ENCODE measurements at regions of chr19 and their contacts with region 1.

Region 1: GRCh38 chr19:37506387-37507166 is at the start of gene ZNF793:
- DNase-seq: peak; percentile 70
- ATAC-seq: peak; percentile 87
- H3K4me3 Mint-ChIP-seq: no peak within 1 kb of the TSS
- H3K27ac Mint-ChIP-seq: no peak within 1 kb of the TSS
- H3K4me1 Mint-ChIP-seq: peaks cover 2% of the 10 kb centered on the region
- H3K27me3 Mint-ChIP-seq: no peaks in the 10 kb centered on the region
- CTCF ChIP-seq: no peak
- total RNA-seq, gene ZNF793: 8.4 and 8.7 TPM in 2 replicates

Region 2: DNA sequence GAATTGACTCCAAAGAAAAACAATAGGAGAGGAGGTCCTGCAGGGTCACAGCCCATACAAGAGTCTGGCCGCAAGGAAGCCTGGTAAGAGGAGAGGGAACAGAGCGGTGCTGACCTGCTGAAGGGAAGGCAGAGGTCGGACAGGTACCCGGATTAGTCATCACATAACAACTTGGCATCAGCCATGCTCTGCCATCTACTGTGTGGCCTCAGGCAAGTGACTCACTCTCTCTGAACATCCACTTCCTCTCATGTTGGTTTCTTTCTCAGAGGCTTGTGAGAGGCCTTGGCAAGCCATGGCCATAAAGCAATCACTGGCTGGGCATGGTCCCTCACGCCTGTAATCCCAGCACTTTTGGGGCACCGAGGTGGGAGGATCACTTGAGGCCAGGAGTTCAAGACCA is 1374.1 kb before region 1 on chr19:
- CTCF ChIA-PET with region 1: no interaction called
- POLR2A ChIA-PET with region 1: no interaction called
- intact Hi-C with region 1: loop called (anchors 5 kb)
- DNase-seq: no peak
- ATAC-seq: no peak
- H3K4me3 Mint-ChIP-seq: no peak overlapping the region
- H3K27ac Mint-ChIP-seq: no peak overlapping the region
- H3K4me1 Mint-ChIP-seq: peaks cover 18% of the 10 kb centered on the region
- H3K27me3 Mint-ChIP-seq: peaks cover 2% of the 10 kb centered on the region
- CTCF ChIP-seq: no peak

Region 3: DNA sequence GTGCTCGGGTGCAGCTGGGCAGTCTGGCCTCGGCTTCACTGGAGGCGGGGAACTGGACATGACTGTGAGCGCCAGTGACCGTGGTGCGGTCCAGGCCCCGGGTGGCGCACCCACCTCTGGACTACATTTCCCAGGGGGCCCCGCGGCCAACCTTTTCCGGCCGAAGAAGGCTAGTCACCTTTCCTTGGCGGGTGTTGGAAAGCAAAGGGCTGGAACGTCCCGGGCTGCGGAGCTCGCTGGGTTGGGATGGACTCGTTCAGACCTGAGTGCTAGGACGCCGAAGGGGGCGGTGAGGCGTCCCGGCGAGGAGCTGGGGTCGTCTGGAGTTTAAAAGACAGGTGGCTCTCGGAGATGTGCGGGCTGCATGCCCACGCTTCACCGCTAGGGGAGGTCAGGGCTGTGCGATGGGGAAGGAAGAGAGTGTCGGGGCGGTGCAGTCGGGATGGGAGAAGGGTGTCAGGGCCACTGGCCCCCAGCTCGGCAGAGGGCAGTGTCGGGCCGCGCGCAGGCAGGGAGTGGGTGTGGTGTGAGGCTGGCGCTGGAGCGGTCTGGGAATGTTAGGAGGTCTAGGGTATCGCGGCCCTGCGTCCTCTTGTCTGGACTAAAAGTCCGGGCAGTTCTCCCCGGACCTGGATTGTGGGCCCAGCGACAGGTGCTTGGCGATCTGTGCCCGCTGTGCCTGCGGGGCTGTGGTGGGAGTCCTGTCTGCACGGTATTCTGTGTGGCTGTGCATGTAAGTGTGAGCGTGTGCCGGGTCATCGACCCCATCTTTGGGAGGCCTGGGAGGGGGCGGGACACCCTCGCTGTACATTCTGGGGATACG is 533.3 kb before region 1 on chr19:
- CTCF ChIA-PET with region 1: no interaction called
- POLR2A ChIA-PET with region 1: interaction called, 3 read pairs
- intact Hi-C with region 1: loop called (anchors 2 kb)
- DNase-seq: peak; percentile 75
- ATAC-seq: peak; percentile 97
- H3K4me3 Mint-ChIP-seq: peak overlapping the region; percentile 98
- H3K27ac Mint-ChIP-seq: peak overlapping the region; percentile 94
- H3K4me1 Mint-ChIP-seq: peaks cover 10% of the 10 kb centered on the region
- H3K27me3 Mint-ChIP-seq: no peaks in the 10 kb centered on the region
- CTCF ChIP-seq: peak; percentile 38

Region 4: GRCh38 chr19:37551129-37551993 is 44.8 kb after region 1 on chr19:
- CTCF ChIA-PET with region 1: interaction called, 4 read pairs
- POLR2A ChIA-PET with region 1: interaction called, 12 read pairs
- intact Hi-C with region 1: loop called (anchors 1 kb)
- DNase-seq: peak; percentile 70
- ATAC-seq: peak; percentile 85
- H3K4me3 Mint-ChIP-seq: peak overlapping the region; percentile 93
- H3K27ac Mint-ChIP-seq: peak overlapping the region; percentile 91
- H3K4me1 Mint-ChIP-seq: peaks cover 12% of the 10 kb centered on the region
- H3K27me3 Mint-ChIP-seq: no peaks in the 10 kb centered on the region
- CTCF ChIP-seq: no peak

Measured in activated B cell treated with CpG ODN at 0.5 μM for 24 hours (primary cell).